ENCODE measurements at regions of chr2 and their contacts with region 1.

Region 1: GRCh38 chr2:190804182-190804795 is 76.3 kb upstream of the GLS start:
- DNase-seq: no peak
- H3K4me3 ChIP-seq: no peak overlapping the region
- H3K27me3 ChIP-seq: no peaks in the 10 kb centered on the region
- CTCF ChIP-seq: peak; percentile 61

Region 2: DNA sequence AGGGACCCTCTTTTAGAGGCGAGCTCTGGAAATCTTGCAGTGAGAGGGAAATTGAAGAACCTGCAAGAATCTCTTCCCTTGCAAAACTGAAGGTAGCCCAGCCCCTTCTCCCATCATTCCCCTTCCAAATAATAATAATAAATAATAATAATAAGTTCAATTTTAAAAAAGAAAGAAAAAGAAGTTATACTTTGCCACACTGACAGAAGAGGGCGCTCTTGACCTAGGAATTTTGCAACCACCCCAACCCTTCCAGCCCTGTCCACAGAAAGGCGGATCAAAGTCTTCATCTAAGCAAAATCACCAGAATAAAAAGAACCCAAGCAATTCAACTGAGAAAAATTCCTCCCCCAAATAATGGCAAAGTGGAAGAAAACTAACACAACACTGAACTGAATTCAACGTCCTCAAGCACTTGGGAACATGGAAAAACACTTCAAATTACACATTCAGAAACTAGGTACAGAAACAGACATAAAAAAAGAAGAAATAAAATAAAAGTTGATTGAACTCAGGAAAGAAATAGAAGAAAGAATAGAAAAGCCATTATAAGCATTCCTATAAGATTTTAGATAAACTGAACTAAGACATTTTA is 22.6 kb before region 1 on chr2:
- CTCF ChIA-PET with region 1: interaction called, 16 read pairs
- POLR2A ChIA-PET with region 1: no interaction called
- DNase-seq: no peak
- H3K4me3 ChIP-seq: no peak overlapping the region
- H3K27me3 ChIP-seq: peaks cover 2% of the 10 kb centered on the region; the same call in 1 of the 2 replicates
- CTCF ChIP-seq: peak; percentile 57

Region 3: DNA sequence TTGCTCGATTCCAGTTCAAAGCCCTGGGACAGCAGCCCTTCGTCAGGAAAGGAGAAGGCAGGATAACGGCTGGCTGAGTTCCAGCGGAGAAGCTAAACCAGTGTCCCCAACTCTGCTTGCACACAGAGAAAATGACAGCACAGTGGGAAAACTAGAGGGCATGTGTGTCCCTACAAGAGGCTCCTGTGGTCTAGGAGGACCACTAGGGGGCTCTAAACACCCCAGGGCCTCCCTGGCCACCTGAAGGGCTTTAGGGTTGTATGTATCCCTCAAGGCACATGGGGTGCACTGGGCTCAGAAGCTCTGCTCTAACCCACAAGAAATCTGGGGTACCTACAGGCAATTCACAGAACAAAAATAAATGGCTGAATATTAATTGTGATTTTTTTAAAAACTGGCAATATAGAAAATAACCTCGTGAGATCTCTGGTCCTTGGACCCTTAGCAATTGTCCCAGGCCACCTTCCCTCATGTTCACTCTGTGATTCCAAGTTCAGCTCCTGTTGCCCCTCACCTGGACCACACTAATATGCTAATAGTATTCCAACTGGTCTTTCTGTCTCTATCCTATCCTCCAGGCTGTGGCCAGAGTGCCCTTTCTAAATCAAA is 192.2 kb after region 1 on chr2:
- CTCF ChIA-PET with region 1: no interaction called
- POLR2A ChIA-PET with region 1: no interaction called
- DNase-seq: no peak
- H3K4me3 ChIP-seq: no peak overlapping the region
- H3K27me3 ChIP-seq: no peaks in the 10 kb centered on the region
- CTCF ChIP-seq: peak; percentile 72

Measured in BJ (cell line).